Panc1 (cell line): ENCODE measurements at regions of chr13 and their contacts with region 1.

Region 1: DNA sequence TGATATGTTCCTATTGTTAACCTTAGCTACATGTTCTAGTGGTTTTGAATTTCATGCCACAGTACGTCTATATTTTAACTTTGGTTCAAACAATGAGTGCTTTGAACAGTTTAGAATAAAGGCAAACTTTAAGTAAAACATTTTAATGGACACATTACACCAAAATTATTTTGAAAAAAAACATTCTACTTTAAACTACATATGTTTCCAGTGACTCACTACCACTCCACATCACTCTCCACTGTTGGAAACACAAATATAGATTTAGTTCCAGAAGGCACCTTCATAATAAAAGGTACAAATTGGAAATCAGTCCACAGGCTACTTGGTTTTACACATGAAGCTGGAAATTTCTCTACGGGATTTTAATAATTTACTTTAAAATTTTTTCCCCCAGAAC is 373.5 kb downstream of the MYO16 start:
- DNase-seq: no peak
- ATAC-seq: no peak
- H3K4me3 ChIP-seq: no peak overlapping the region
- H3K27ac ChIP-seq: no peak overlapping the region
- H3K4me1 ChIP-seq: no peaks in the 10 kb centered on the region
- H3K27me3 ChIP-seq: no peaks in the 10 kb centered on the region
- CTCF ChIP-seq: no peak

Region 2: DNA sequence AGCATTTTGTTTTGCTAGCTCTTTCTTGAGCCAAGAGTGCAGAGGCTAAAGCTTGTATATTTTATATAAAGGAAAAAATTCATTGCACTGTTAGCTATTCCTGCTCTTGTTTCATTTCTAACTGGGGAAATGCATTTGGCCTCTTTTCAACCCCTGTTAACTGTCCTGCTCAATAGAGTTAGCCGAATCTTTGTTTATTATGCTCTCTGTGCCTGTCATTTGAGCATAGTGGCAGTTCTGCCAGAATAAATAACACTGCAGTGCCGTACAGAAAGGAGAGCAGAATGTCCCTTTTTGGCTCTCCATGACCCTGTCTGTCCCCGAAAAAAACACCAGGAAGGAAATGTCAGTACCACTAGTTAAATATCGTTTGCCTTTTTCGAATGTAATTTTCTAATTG is 22.7 kb before region 1 on chr13:
- CTCF ChIA-PET with region 1: no interaction called
- POLR2A ChIA-PET with region 1: no interaction called
- in situ Hi-C with region 1: no loop called
- intact Hi-C with region 1: no loop called
- DNase-seq: no peak
- ATAC-seq: no peak
- H3K4me3 ChIP-seq: no peak overlapping the region
- H3K27ac ChIP-seq: no peak overlapping the region
- H3K4me1 ChIP-seq: no peaks in the 10 kb centered on the region
- H3K27me3 ChIP-seq: no peaks in the 10 kb centered on the region
- CTCF ChIP-seq: no peak

Region 3: DNA sequence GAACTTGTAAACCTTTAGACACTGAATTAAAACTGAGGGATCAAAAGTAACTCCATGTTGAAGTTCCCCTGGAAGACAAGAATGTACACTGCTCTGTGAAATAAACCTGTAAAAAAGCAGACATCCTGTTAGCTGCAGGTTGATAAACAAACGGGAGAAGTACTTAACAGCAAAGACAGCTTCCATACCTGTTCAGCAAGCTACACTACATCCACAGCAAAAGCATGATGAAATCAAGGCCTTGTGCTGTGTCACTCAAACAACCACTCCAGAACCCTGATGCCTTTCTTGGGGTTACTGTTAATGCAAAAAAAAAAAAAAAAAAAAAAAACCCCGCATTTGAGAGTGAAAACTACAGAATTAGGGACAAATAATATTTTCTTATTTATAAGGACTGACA is 1891.2 kb after region 1 on chr13:
- CTCF ChIA-PET with region 1: no interaction called
- POLR2A ChIA-PET with region 1: interaction called, 16 read pairs
- in situ Hi-C with region 1: no loop called
- intact Hi-C with region 1: no loop called
- DNase-seq: no peak
- ATAC-seq: no peak
- H3K4me3 ChIP-seq: no peak overlapping the region
- H3K27ac ChIP-seq: no peak overlapping the region
- H3K4me1 ChIP-seq: no peaks in the 10 kb centered on the region
- H3K27me3 ChIP-seq: no peaks in the 10 kb centered on the region
- CTCF ChIP-seq: no peak